GM10248 (cell line): ENCODE measurements at regions of chr15 and their contacts with region 1.

Region 1: DNA sequence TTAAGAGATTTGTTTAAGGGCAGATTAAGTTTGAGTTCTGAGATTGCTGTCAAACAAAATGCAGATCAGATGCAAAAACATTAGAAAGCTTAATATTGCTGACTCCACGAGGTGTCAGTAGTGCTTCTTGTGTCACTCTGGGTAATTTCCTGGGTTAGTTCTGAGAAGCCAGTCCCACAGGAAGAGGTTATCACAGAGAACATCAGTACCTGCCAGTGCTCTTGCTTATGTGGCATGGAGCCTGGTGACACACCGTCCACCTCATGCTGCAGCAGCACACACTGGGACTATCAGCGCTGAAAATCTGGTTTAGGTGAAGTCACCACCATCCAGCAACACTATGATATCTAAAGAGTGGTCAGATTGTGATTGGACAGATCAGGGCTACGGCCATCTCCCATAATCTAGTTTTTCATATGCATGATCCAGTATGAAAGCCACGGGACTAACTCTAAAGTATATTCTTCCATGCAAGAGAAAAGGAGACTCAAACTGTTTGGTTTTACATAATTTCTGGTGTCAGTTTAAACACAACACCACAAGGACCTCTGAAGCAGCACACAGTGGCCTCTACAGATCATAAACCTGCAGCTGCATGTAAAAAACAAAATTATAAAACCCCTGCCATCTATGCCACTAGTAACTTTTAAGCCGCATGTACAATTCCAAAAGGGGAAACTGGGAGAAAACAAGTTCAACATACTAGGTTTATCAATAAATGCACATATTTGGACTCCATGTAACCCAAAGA is 36.1 kb upstream of the MYO5C start:
- DNase-seq: peak; percentile 73
- CTCF ChIP-seq: peak; percentile 69

Region 2: DNA sequence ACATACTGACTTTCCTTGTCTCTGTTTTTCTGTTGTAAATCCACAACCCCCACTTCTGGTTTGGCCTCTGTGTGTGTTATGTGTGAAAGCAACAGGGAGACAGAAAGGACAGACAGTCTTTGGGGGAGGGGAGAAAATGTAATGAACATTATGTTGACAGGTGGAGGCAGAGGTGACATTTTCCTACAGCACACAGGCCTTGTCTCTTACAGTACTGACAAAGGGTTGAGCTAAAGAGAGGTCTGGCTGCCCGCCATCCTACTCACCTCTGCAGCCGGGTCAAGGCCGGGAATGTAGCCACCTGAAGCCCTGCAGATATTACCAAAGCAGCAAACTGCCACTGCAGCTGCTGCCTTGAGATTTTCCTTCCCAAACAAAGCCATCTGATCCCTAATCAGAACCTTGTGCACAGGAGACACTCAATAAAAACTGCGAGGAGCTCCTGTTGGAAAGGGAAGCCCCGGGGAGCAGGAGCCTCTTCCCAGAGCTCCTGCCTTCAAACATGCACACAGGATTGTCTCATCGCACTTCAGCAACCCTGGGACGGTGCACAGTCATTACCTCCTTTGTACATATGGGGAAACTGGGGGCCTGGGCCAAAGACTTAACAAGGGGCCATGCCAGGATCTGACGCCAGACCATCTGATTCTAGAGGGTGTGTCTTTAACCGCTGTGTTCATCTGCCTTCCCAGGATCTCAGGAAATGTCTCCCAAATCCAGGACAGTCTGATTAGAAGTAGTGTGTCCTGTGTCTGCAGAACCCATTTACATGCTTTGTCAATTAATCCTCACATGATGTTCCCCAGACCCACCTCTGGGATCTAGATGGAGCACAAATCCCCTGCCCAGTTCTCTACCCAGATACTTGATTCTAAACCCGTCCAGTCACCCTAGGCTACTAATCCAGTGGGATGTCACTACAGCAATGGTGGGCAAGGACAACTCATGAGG is 50.3 kb before region 1 on chr15:
- CTCF ChIA-PET with region 1: no interaction called
- POLR2A ChIA-PET with region 1: no interaction called
- DNase-seq: no peak
- CTCF ChIP-seq: no peak

Region 3: GRCh38 chr15:52343831-52344230 is 12.2 kb after region 1 on chr15:
- CTCF ChIA-PET with region 1: interaction called, 14 read pairs
- POLR2A ChIA-PET with region 1: no interaction called
- DNase-seq: no peak
- CTCF ChIP-seq: no peak

Region 4: GRCh38 chr15:52735231-52736089 is 403.8 kb after region 1 on chr15:
- CTCF ChIA-PET with region 1: interaction called, 25 read pairs
- POLR2A ChIA-PET with region 1: no interaction called
- DNase-seq: peak; percentile 74
- CTCF ChIP-seq: peak; percentile 68